ENCODE measurements at regions of chr11 and their contacts with region 1.

Region 1: GRCh38 chr11:326842-327580 is 6.4 kb upstream of the IFITM3 start:
- DNase-seq: peak; percentile 97
- H3K4me3 ChIP-seq: peak overlapping the region; percentile 8 to 25 (median 14)
- H3K27ac ChIP-seq: peak overlapping the region; percentile 86 to 90 (median 87)
- H3K4me1 ChIP-seq: peaks cover 46 to 57% (median 48%) of the 10 kb centered on the region in 4 donors
- H3K27me3 ChIP-seq: no peaks in the 10 kb centered on the region
- CTCF ChIP-seq: no peak
- EP300 ChIP-seq: no peak
- POLR2A ChIP-seq: no peak

Region 2: GRCh38 chr11:257766-258493 is 69.1 kb before region 1 on chr11:
- intact Hi-C with region 1: no loop called
- DNase-seq: no peak
- H3K4me3 ChIP-seq: no peak overlapping the region
- H3K27ac ChIP-seq: no peak overlapping the region
- H3K4me1 ChIP-seq: no peaks in the 10 kb centered on the region
- H3K27me3 ChIP-seq: peaks cover 0 to 2% (median 0%) of the 10 kb centered on the region in 4 donors
- CTCF ChIP-seq: no peak
- EP300 ChIP-seq: no peak
- POLR2A ChIP-seq: no peak

Region 3: DNA sequence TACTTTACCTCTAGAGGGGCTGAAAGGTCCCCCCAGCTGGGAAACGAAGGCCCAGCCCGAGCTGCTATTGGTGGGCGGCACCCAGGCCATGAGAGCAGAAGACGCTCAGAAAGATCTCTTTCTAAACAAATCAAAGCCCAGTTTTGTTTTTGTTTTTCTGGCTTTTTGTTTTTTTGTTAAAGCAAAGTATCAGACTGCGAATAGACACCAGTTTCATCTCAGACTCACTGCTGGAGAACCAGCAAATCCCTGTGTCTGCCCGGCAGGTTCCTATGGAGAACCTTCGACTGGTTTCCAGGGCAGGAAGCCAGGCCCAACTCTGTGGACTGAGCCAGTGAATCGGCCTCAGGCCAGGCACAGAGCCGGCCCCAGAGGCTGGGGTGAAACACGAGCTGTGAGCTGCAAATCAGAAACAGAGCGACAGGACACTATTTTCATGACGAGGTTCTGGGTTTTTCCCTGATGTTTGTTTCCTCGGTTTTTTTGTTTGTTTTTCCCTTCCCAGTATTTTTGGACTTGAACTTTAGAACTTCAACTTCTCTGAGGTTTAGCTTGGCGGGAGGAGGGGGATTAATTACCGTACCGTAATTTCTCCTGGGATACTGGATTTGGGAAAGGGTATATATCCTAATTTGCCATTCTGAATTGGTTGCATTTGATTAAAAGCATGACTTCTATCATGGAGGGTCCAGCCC is 26.3 kb after region 1 on chr11:
- intact Hi-C with region 1: loop called (anchors 2 kb)
- DNase-seq: no peak
- H3K4me3 ChIP-seq: peak overlapping the region in 2 of 4 donors; percentile 1 to 3
- H3K27ac ChIP-seq: peak overlapping the region; percentile 96 to 99 (median 98)
- H3K4me1 ChIP-seq: peaks cover 36 to 56% (median 49%) of the 10 kb centered on the region in 4 donors
- H3K27me3 ChIP-seq: no peaks in the 10 kb centered on the region
- CTCF ChIP-seq: no peak
- EP300 ChIP-seq: no peak
- POLR2A ChIP-seq: no peak

Region 4: DNA sequence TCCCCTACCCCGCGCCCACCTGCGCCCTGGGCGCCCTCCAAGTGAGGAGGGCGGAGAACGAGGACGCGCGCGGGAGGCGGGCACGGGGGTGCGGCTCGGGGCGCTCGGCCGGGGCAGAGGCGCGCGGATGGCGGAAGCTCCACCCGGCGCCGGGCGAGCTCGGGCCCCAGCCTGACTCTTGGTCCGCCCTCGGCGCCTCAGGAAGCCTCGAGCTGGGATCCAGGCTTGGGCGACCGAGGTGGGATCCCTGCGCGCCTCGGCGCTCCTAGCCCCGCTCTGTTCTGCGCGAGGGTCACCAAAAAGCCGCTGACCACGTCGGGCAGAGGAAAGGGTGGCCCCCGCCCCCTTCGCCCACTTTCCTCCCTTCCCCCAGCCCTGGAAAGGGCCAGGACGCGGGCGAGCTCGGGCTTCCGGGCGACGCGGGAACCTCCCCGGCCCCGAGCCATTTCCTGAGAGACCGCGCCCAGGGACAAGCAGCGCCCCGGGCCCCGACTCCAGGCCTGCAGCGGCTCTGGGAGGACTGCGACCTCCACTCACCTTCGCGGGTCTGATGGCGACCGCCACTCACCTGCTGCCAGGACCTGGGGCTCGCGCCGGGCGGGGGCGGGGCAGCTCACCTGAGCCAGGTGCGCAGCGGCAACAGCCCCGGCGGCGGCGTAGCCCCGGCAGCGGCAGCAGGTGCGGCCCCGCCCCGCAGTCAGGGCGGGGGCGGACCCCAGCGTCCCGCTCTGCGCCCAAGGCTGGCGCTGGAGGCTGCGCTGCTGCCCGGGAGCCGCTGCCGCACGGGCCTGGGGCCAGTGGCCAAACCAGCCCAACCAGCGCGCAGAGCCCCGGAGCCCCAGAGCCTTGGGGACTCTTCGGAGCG is 90.0 kb after region 1 on chr11:
- intact Hi-C with region 1: no loop called
- DNase-seq: no peak
- H3K4me3 ChIP-seq: peak overlapping the region; percentile 51 to 62 (median 54)
- H3K27ac ChIP-seq: peak overlapping the region; percentile 66 to 79 (median 78)
- H3K4me1 ChIP-seq: peaks cover 9 to 31% (median 26%) of the 10 kb centered on the region in 4 donors
- H3K27me3 ChIP-seq: peaks cover 0 to 73% (median 41%) of the 10 kb centered on the region in 4 donors
- CTCF ChIP-seq: no peak
- EP300 ChIP-seq: no peak
- POLR2A ChIP-seq: no peak